ENCODE measurements at regions of chr22 and their contacts with region 1.

Region 1: DNA sequence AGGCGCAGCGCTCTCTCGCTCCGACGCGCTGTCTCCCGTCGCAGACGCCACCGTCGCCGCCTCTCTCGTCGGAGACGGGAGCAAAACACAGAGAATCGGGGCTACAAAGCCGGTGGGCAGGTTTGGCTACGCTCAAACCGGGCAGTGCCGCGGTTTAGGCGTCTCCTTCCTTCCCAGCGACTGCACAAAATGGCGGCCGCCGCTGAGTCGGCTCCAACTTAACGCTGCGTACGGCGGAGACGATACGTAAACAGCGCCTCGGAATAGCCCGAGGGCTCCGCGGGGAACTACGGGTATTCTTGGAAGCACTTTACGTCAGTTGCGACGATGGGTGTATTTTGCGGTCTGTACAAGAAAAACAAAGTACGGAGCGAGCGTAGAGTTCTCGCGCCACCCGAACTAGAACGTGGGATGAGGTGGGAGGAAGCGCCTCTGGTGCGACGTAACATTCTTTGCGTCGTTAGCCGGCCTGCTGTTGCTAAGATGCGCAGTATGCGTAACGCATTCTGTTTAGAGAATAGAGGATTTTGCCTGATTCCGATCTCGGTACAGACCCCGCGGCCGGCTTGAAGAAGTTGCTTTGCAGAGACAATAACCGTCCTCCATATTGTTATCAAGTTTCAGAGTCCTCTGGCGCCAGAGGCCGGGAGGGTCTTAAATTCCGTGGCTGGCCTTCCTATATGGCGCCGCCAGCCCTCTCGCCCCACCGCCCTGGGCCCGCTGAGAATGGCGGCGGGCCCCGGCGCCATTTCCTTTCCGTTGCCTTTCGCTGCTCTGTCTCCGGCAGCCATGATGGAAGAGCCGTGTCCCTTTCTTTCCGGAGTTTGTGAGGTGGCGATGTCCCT is at the start of gene DDX17:
- DNase-seq: peak; percentile 99
- H3K4me3 ChIP-seq: peak within 1 kb of the TSS; percentile 83
- H3K27ac ChIP-seq: peak within 1 kb of the TSS; percentile 91
- H3K4me1 ChIP-seq: peaks cover 36% of the 10 kb centered on the region
- CTCF ChIP-seq: no peak
- total RNA-seq, gene DDX17: 626 and 667 TPM in 2 replicates

Region 2: GRCh38 chr22:38398609-38399461 is 107.5 kb before region 1 on chr22:
- CTCF ChIA-PET with region 1: no interaction called
- POLR2A ChIA-PET with region 1: interaction called, 4 read pairs
- intact Hi-C with region 1: loop called (anchors 2 kb)
- DNase-seq: peak; percentile 89
- H3K4me3 ChIP-seq: peak overlapping the region; percentile 87
- H3K27ac ChIP-seq: peak overlapping the region; percentile 90
- H3K4me1 ChIP-seq: peaks cover 28% of the 10 kb centered on the region
- CTCF ChIP-seq: no peak

Region 3: GRCh38 chr22:38761202-38762162 is 255.1 kb after region 1 on chr22:
- CTCF ChIA-PET with region 1: no interaction called
- POLR2A ChIA-PET with region 1: no interaction called
- intact Hi-C with region 1: no loop called
- DNase-seq: no peak
- H3K4me3 ChIP-seq: no peak overlapping the region
- H3K27ac ChIP-seq: no peak overlapping the region
- H3K4me1 ChIP-seq: peaks cover 21% of the 10 kb centered on the region
- CTCF ChIP-seq: no peak